H1 (cell line): ENCODE measurements at regions of chr18 and their contacts with region 1.

Region 1: DNA sequence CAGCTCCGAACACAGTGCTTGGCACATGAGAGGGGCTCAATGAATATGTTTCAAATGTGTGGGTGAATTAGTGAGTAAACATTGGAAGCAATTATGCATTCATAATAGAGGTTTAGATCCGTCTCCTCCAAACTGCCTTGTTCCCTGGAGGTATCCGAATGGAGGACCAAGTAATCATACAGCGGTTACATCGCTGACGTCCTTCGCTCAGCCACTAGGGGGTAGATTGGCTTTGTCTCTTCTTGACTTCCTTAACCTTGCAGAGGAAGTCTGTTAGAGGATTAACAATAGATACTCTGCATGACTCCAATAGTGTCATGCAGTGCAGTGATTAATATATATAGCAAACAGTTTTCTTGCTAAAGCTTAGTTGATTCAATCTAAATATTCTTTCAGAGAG is 517.0 kb downstream of the PTPRM start:
- DNase-seq: peak; percentile 55 to 63
- H3K4me3 ChIP-seq: peak overlapping the region in 1 of 4 experiments; percentile 38; a peak in 1 of 8 replicates
- H3K27ac ChIP-seq: no peak overlapping the region; the same call in 1 of the 2 replicates
- H3K4me1 ChIP-seq: peaks cover 1 to 23% (median 5%) of the 10 kb centered on the region in 4 experiments; a peak in 4 of 7 replicates
- H3K27me3 ChIP-seq: peaks cover 0 to 3% (median 0%) of the 10 kb centered on the region in 4 experiments; a peak in 4 of 7 replicates
- CTCF ChIP-seq: peak; percentile 63 to 83 (median 66)
- EP300 ChIP-seq: peak in 1 of 2 experiments; percentile 88; a peak in 1 of 3 replicates
- POLR2A ChIP-seq: no peak
- RAD21 ChIP-seq: peak; percentile 63 to 76

Region 2: GRCh38 chr18:8116346-8117005 is 32.3 kb after region 1 on chr18:
- CTCF ChIA-PET with region 1: interaction called, 10 read pairs
- POLR2A ChIA-PET with region 1: interaction called, 3 read pairs
- DNase-seq: no peak
- H3K4me3 ChIP-seq: no peak overlapping the region
- H3K27ac ChIP-seq: no peak overlapping the region
- H3K4me1 ChIP-seq: no peaks in the 10 kb centered on the region
- H3K27me3 ChIP-seq: no peaks in the 10 kb centered on the region
- CTCF ChIP-seq: no peak
- EP300 ChIP-seq: no peak
- POLR2A ChIP-seq: no peak
- RAD21 ChIP-seq: no peak

Region 3: GRCh38 chr18:8153887-8154583 is 69.9 kb after region 1 on chr18:
- CTCF ChIA-PET with region 1: no interaction called
- POLR2A ChIA-PET with region 1: no interaction called
- DNase-seq: no peak
- H3K4me3 ChIP-seq: no peak overlapping the region
- H3K27ac ChIP-seq: no peak overlapping the region
- H3K4me1 ChIP-seq: no peaks in the 10 kb centered on the region
- H3K27me3 ChIP-seq: no peaks in the 10 kb centered on the region
- CTCF ChIP-seq: no peak
- EP300 ChIP-seq: no peak
- POLR2A ChIP-seq: no peak
- RAD21 ChIP-seq: no peak

Region 4: GRCh38 chr18:8389391-8390340 is 305.5 kb after region 1 on chr18:
- CTCF ChIA-PET with region 1: interaction called, 18 read pairs
- POLR2A ChIA-PET with region 1: no interaction called
- DNase-seq: peak; percentile 66 to 84
- H3K4me3 ChIP-seq: no peak overlapping the region
- H3K27ac ChIP-seq: no peak overlapping the region
- H3K4me1 ChIP-seq: no peaks in the 10 kb centered on the region
- H3K27me3 ChIP-seq: no peaks in the 10 kb centered on the region
- CTCF ChIP-seq: peak; percentile 86 to 96 (median 89)
- EP300 ChIP-seq: no peak
- POLR2A ChIP-seq: no peak
- RAD21 ChIP-seq: peak; percentile 93 to 94